ENCODE measurements at regions of chr10 and their contacts with region 1.

Region 1: DNA sequence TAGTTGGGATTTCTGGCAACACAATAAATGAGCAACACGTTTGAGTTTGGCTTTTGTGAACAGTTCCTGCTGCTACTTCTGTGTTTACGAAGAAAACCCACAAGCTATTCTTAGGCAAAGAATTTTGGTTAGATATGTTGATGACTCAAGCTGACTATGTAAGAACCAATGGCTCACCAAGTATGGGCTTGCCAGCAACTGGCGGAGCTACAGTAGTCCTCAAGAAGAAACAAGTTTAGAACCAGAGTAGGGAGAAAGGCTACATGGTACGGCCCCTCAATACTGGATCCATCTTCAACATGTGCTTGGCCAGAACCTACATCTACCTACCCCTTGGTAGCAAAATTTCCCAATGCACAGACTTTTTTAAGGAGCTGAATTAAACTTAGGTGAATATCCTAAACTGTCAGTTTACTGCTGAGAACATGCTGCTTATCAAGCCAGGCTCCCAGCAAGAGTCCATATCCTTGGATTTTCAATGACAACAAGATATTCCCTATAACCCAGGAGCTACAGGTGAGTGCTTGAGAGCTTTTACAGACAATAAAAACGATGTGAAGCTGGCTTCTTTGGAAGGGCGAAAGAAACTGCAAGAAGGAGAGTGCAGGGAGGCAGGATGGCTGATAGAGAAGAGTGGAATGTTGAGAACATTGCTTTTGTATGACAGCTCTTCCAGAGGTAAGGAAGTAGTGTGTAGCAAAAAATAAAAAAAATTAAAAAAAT is 74.3 kb upstream of the ASAH2 start:
- DNase-seq: no peak
- ATAC-seq: peak; percentile 76
- H3K4me3 ChIP-seq: no peak overlapping the region
- H3K27ac ChIP-seq: peak overlapping the region; percentile 38; the same call in 1 of the 2 replicates
- H3K4me1 ChIP-seq: peaks cover 17% of the 10 kb centered on the region
- H3K27me3 ChIP-seq: no peaks in the 10 kb centered on the region
- CTCF ChIP-seq: no peak
- EP300 ChIP-seq: no peak
- POLR2A ChIP-seq: no peak
- RAD21 ChIP-seq: no peak

Region 2: DNA sequence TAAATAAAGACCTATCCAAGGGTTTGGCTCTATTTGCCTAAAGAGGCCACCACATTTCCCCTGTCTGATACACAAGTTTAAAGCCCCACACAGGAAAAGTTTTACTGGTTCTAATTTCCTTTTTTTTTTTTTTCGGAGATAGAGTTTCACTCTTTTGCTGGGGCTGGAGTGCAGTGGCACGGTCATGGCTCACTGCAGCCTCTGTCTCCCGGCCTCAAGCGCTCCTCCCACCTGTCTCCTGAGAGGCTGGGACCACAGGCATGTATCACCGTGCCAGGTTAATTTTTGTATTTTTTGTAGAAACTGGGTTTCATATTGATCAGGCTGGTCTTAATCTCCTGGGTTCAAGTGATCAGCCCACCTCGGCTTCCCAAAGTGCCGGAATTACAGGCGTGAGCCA is 20.9 kb before region 1 on chr10:
- CTCF ChIA-PET with region 1: interaction called, 3 read pairs
- POLR2A ChIA-PET with region 1: interaction called, 5 read pairs
- RAD21 ChIA-PET with region 1: interaction called, 4 read pairs
- SMC1A ChIA-PET with region 1: interaction called, 4 read pairs
- in situ Hi-C with region 1: no loop called
- intact Hi-C with region 1: loop called (anchors 2 kb)
- DNase-seq: no peak
- ATAC-seq: no peak
- H3K4me3 ChIP-seq: no peak overlapping the region
- H3K27ac ChIP-seq: no peak overlapping the region
- H3K4me1 ChIP-seq: no peaks in the 10 kb centered on the region
- H3K27me3 ChIP-seq: no peaks in the 10 kb centered on the region
- CTCF ChIP-seq: no peak
- EP300 ChIP-seq: no peak
- POLR2A ChIP-seq: no peak
- RAD21 ChIP-seq: no peak

Region 3: DNA sequence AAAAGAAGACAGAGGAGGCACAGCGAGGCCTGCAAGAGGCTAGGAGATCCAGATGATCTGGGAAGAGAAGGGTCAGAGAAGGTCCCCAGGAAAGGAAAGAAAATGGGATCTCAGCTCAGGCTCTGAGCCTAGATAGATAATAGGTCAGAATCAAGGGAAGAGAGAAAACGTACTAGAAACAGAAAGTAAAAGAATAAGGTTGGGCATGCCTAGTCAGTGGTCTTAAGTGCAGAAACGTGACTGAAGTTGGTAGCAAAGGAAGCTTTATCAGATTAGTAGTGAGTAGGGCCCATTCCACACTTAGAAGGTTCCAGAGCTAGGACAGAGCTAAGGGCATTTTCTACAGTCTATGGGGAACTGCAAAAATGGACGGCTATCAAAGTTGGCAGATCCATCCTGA is 10.5 kb after region 1 on chr10:
- CTCF ChIA-PET with region 1: interaction called, 3 read pairs
- POLR2A ChIA-PET with region 1: interaction called, 3 read pairs
- RAD21 ChIA-PET with region 1: interaction called, 3 read pairs
- SMC1A ChIA-PET with region 1: interaction called, 15 read pairs
- in situ Hi-C with region 1: no loop called
- intact Hi-C with region 1: no loop called
- DNase-seq: no peak
- ATAC-seq: peak; percentile 67
- H3K4me3 ChIP-seq: no peak overlapping the region
- H3K27ac ChIP-seq: peak overlapping the region; percentile 4; the same call in 1 of the 2 replicates
- H3K4me1 ChIP-seq: no peaks in the 10 kb centered on the region
- H3K27me3 ChIP-seq: no peaks in the 10 kb centered on the region
- CTCF ChIP-seq: no peak
- EP300 ChIP-seq: no peak
- POLR2A ChIP-seq: no peak
- RAD21 ChIP-seq: no peak

Region 4: DNA sequence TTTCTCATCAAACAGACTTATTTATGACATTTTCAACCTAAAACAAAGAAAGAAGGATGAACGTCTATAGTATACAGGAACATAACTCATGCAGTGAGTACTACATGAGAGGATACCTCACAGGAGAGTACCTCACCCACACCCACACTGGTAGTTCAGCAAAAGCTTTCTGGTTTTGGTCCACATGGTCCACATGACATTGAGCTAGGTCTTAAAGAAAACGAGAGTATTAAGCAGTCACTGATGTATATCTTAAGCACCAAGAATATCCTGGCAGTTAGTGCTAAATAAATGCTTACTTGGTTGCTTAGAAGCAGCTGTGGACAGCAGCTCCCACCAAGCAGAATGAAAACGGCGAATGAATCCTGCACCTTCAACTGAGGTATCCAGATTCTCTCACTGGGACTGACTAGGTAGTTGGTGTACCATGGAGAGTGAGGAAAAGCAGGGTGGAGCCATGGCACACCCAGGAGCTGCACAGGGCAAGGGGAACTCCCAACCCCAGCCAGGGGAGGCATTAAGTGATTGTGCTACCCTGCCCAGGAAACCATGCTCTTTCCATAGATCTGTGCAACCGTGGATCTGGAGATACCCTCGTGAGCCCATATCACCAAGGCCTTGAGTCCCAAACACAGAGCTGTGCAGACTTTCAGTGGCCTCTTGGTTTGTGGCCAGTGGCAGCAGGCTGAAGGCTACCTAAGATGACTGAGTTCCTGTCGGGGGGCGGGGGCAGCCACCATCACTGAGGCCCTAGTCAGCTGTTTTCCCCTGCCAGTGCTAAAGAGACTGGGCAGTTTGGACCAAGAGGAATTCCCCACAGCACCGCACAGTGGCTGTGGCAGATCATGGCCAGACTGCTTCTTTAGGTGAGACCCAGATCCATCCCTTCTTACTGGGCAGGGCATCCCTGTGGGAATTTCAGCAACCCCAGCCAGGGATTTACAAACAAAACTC is 154.7 kb after region 1 on chr10:
- CTCF ChIA-PET with region 1: no interaction called
- POLR2A ChIA-PET with region 1: no interaction called
- RAD21 ChIA-PET with region 1: no interaction called
- SMC1A ChIA-PET with region 1: no interaction called
- in situ Hi-C with region 1: no loop called
- intact Hi-C with region 1: no loop called
- DNase-seq: no peak
- ATAC-seq: no peak
- H3K4me3 ChIP-seq: no peak overlapping the region
- H3K27ac ChIP-seq: no peak overlapping the region
- H3K4me1 ChIP-seq: 0 out of 2 replicates have a peak, but pooled peaks cover 3% of the 10 kb centered on the region
- H3K27me3 ChIP-seq: no peaks in the 10 kb centered on the region
- CTCF ChIP-seq: no peak
- EP300 ChIP-seq: no peak
- POLR2A ChIP-seq: no peak
- RAD21 ChIP-seq: no peak

Region 5: GRCh38 chr10:51510231-51510630 is 1184.6 kb after region 1 on chr10:
- CTCF ChIA-PET with region 1: no interaction called
- POLR2A ChIA-PET with region 1: no interaction called
- RAD21 ChIA-PET with region 1: no interaction called
- SMC1A ChIA-PET with region 1: no interaction called
- in situ Hi-C with region 1: no loop called
- intact Hi-C with region 1: no loop called
- DNase-seq: no peak
- ATAC-seq: no peak
- H3K4me3 ChIP-seq: no peak overlapping the region
- H3K27ac ChIP-seq: no peak overlapping the region
- H3K4me1 ChIP-seq: no peaks in the 10 kb centered on the region
- H3K27me3 ChIP-seq: no peaks in the 10 kb centered on the region
- CTCF ChIP-seq: no peak
- EP300 ChIP-seq: no peak
- POLR2A ChIP-seq: no peak
- RAD21 ChIP-seq: no peak

Measured in GM12878 (cell line).